A549 (cell line): ENCODE measurements at regions of chr12 and their contacts with region 1.

Region 1: GRCh38 chr12:46963977-46964971 is 115.1 kb upstream of the PCED1B start:
- DNase-seq: peak in 1 of 2 experiments; percentile 18
- ATAC-seq: peak; percentile 50 to 80; a peak in 4 of 6 replicates
- H3K4me3 ChIP-seq: no peak overlapping the region
- H3K27ac ChIP-seq: peak overlapping the region; percentile 26 to 42; a peak in 3 of 6 replicates
- H3K4me1 ChIP-seq: peaks cover 28% of the 10 kb centered on the region
- CTCF ChIP-seq: no peak
- EP300 ChIP-seq: no peak
- POLR2A ChIP-seq: no peak
- RAD21 ChIP-seq: no peak

Region 2: GRCh38 chr12:46921048-46921763 is 43.1 kb before region 1 on chr12:
- CTCF ChIA-PET with region 1: no interaction called
- POLR2A ChIA-PET with region 1: no interaction called
- DNase-seq: peak in 1 of 2 experiments; percentile 31
- ATAC-seq: peak in 1 of 2 experiments; percentile 68; a peak in 2 of 6 replicates
- H3K4me3 ChIP-seq: no peak overlapping the region
- H3K27ac ChIP-seq: peak overlapping the region in 1 of 2 experiments; percentile 34; a peak in 1 of 6 replicates
- H3K4me1 ChIP-seq: peaks cover 4% of the 10 kb centered on the region; the same call in 1 of the 3 replicates
- CTCF ChIP-seq: no peak
- EP300 ChIP-seq: no peak
- POLR2A ChIP-seq: no peak
- RAD21 ChIP-seq: no peak

Region 3: GRCh38 chr12:46983393-46984266 is 19.4 kb after region 1 on chr12:
- CTCF ChIA-PET with region 1: interaction called, 16 read pairs
- POLR2A ChIA-PET with region 1: no interaction called
- DNase-seq: peak; percentile 34 to 76
- ATAC-seq: peak; percentile 85 to 96
- H3K4me3 ChIP-seq: no peak overlapping the region
- H3K27ac ChIP-seq: 0 out of 6 replicates have a peak overlapping the region, but pooled peaks of 1 of the 2 experiments have one; percentile 40
- H3K4me1 ChIP-seq: no peaks in the 10 kb centered on the region
- CTCF ChIP-seq: peak; percentile 80
- EP300 ChIP-seq: no peak
- POLR2A ChIP-seq: no peak
- RAD21 ChIP-seq: peak; percentile 86 to 92

Region 4: DNA sequence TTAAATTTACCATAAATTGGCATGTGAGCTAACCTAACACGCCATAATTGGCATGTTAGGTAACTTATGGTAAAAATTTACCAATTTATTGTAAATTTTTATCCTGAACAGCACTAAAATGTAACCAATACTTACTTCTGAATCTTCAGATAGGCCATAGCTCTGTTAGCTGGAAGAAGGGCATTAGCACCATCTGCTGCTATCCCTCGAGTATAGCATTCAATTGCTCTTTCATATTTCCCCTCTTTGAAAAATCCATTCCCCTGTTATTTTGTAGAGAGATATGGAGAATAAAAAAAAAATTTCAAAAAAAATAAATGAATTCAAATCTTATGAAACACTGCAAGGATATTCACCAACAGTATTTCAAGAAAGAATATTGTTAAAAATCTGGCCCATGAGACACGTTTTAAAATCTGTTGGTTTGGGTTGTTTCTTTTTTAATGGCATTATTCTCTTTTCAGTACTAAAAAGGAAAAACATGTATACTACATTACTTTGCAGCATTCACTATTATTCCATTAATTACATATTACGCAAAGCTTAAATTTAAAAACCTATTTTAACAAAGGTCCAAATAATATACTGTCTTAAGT is 722.5 kb after region 1 on chr12:
- CTCF ChIA-PET with region 1: no interaction called
- POLR2A ChIA-PET with region 1: no interaction called
- DNase-seq: peak; percentile 53 to 66
- ATAC-seq: peak; percentile 70 to 83
- H3K4me3 ChIP-seq: no peak overlapping the region
- H3K27ac ChIP-seq: peak overlapping the region; percentile 14 to 45; a peak in 3 of 6 replicates
- H3K4me1 ChIP-seq: peaks cover 3% of the 10 kb centered on the region; the same call in 1 of the 3 replicates
- CTCF ChIP-seq: peak; percentile 93
- EP300 ChIP-seq: no peak
- POLR2A ChIP-seq: no peak
- RAD21 ChIP-seq: peak; percentile 89 to 91